ENCODE measurements at regions of chr12 and their contacts with region 1.

Region 1: DNA sequence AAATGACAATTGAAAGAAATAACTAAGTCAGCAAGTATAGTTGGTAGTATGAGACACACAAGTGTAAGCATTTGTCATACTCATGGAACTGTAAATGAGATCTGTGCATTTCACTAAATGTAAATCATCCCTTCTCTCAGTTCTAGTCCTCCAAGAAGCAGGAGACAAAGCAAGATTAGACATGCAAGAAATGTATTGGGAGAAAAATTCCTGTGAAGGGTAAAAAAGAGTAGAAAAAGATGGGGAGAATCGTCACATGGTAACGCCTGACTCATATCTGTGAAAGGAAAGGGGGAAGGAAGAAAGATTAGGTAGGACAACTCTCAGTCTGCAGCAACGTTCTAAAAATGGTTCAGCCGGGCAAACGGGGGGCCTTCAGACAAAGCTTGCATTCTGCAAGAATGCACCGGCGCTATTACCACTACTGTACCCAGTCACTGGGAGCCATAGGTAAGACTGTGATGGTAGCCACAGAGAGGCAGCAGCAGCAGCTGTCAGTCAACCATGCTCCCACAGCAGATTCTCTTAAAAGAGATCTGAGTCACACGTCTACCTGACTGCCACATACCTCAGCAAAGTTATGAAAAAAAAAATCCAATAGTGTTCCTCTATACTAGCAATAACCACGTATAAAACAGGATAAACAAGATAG is 18.0 kb upstream of the RFX4 start:
- DNase-seq: peak in 1 of 2 experiments; percentile 47
- H3K4me3 ChIP-seq: no peak overlapping the region
- H3K27ac ChIP-seq: no peak overlapping the region
- H3K4me1 ChIP-seq: no peaks in the 10 kb centered on the region
- H3K27me3 ChIP-seq: 0 out of 2 replicates have a peak, but pooled peaks cover 9% of the 10 kb centered on the region
- CTCF ChIP-seq: no peak

Region 2: DNA sequence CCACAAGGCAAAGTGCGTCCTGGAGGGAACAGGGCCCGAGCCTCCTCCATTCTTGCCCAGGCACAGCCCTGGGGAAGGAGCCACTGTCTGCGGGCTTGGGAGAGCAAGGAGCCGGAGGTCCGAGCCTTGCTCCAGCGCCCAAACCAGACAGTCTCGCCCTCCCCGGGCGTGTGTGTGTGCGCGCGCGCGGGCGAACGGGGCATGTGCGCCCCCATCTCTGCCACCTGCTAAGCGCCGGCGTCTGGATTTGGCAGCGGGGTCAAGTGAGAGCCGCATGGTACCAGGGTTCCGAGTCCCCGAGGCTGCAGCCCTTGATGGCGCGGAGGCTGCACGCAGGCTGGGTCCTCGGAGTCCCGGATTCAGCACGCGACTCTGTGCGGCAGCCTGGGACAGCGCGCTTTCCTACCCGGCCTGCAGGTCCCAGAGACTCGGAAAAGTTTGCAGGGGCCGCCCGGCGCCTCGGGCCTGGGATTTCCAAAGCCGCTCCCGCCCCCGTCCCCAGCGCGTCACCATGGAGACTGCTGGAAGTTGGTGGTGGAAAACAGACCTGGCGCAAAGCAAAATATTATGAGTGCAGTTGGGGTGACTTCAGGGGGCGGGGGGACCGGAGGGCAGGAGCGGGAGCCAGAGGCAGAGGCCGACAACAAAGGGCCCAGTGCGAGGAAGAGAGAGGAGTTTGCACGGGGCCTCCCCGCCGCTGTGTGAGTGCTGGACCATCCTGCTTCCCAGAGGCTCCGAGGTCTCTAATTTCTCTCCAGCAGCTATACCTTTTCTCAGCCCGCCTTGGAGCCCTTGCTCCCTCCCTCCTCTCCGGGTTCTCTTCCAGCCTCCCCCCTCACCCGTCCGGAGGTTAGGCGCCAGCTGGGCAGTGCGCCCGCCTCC is 22.2 kb after region 1 on chr12:
- CTCF ChIA-PET with region 1: no interaction called
- POLR2A ChIA-PET with region 1: no interaction called
- intact Hi-C with region 1: loop called (anchors 2 kb)
- DNase-seq: no peak
- H3K4me3 ChIP-seq: no peak overlapping the region
- H3K27ac ChIP-seq: no peak overlapping the region
- H3K4me1 ChIP-seq: no peaks in the 10 kb centered on the region
- H3K27me3 ChIP-seq: peaks cover 80% of the 10 kb centered on the region
- CTCF ChIP-seq: no peak

Region 3: DNA sequence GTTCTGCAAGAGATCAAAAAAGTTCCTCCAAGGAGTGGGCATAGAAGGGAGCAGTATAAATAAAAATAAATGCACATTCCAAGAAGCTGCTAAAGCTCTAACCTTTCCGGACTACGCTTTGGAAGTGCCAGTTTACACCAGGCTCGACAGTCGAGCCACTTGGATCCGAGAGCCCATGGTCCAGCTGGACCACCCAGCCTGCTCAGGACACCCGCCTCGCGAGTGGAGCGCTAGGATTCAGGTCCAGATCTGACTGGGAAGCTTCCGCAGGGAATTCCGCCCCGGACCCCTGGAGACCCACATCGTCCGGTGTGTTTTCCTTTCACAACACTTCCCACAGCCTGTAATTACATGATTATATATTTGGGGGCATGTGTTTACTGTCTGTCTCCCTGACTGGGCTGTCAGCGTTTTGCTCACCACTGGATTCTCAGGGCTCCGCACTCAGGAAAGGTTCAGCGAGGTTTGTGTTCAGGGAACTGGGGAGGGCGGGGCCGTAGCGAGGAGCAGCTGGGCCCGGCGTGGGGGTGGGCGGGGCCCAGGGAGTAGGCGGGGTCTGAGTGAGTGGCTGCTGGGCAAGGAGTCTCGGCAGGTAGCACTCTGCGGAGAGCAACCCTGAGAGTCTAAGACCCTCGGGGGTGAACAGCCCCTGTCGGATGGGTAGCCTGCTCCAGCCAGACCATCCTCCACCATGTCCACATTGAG is 338.6 kb after region 1 on chr12:
- CTCF ChIA-PET with region 1: no interaction called
- POLR2A ChIA-PET with region 1: no interaction called
- intact Hi-C with region 1: no loop called
- DNase-seq: peak in 1 of 2 experiments; percentile 70
- H3K4me3 ChIP-seq: peak overlapping the region; percentile 46; the same call in 1 of the 2 replicates
- H3K27ac ChIP-seq: no peak overlapping the region
- H3K4me1 ChIP-seq: peaks cover 5% of the 10 kb centered on the region; the same call in 1 of the 2 replicates
- H3K27me3 ChIP-seq: no peaks in the 10 kb centered on the region
- CTCF ChIP-seq: no peak